ENCODE measurements at regions of chr10 and their contacts with region 1.

Region 1: DNA sequence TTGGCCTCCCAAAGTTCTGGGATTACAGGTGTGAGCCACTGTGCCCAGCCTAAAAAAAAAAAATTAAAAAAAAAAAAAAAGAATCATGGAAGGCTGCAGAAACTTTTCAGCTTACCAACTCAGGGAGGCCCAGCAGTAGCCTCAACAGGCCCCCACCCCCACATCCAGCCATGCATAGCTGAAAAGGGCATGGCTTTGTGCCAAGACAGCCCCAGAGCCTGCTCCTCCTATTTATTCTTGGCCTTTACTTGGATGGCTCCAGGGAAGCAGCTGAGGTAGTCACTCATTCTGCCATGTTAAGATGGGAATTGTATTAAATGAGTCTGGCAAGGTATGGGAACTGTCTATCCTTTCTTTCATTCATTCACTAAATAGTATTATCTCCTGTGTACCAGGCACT is 13.7 kb upstream of the CNNM2 start:
- DNase-seq: peak in 1 of 5 donors; percentile 41
- ATAC-seq: peak in 2 of 4 donors; percentile 11 to 50
- H3K4me3 ChIP-seq: no peak overlapping the region
- H3K27ac ChIP-seq: no peak overlapping the region
- H3K4me1 ChIP-seq: no peaks in the 10 kb centered on the region
- H3K27me3 ChIP-seq: no peaks in the 10 kb centered on the region
- CTCF ChIP-seq: no peak
- POLR2A ChIP-seq: no peak

Region 2: DNA sequence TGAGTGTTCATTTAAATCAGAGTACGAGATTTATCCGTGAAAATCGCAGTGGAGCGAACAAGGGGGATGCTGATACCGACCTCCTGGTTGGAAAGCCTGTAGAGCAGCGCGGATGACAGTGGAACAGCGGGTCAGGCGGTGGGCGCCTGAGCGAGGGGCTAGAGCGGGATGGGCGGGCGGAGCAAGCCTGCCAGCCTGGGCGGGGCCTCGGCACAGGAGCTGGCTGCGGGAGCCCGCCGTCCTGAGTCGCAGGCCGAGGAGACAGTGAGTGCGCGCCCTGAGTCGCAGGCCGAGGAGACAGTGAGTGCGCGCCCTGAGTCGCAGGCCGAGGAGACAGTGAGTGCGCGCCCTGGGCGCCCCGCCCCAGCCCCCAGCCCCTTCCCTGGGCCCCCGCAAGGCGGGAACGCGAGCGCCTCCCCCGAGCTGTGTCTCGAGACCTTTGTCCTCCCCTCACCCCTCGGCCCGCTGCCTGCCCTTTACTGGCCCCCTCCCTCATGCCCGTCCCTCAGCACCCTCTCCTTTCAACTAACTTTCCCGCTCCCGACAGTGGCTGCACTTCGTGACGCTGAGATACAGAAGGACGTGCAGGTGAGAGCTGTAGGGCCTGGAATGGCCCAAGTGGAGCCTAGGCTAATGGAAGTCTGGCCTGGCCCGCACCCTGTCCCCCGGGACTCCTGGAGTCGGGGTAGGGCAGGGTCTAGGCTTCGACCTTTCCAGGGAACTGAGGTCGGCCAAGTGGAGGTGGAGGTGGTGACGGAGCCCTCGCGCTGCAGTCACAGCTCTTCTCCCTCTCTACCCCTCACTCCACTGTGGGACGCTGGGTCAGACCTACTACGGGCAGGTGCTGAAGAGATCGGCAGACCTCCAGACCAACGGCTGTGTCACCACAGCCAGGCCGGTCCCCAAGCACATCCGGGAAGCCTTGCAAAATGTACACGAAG is 34.8 kb before region 1 on chr10 and contains the start of gene AS3MT:
- intact Hi-C with region 1: loop called in 1 of 10 experiments (anchors 5 kb)
- DNase-seq: peak; percentile 19 to 69 (median 48)
- ATAC-seq: peak; percentile 52 to 92 (median 82)
- H3K4me3 ChIP-seq: peak within 1 kb of the TSS; percentile 27 to 69 (median 60)
- H3K27ac ChIP-seq: peak within 1 kb of the TSS in 10 of 12 donors; percentile 20 to 75 (median 60)
- H3K4me1 ChIP-seq: peaks cover 0 to 20% (median 8%) of the 10 kb centered on the region in 12 donors
- H3K27me3 ChIP-seq: peaks cover 0 to 10% (median 0%) of the 10 kb centered on the region in 9 donors
- CTCF ChIP-seq: no peak
- POLR2A ChIP-seq: no peak
- total RNA-seq, gene AS3MT: 8.6 to 29.0 (median 15.8) TPM

Region 3: GRCh38 chr10:102917962-102918816 is 13.8 kb after region 1 on chr10 and contains the start of gene CNNM2:
- intact Hi-C with region 1: no loop called
- DNase-seq: peak; percentile 100
- ATAC-seq: peak; percentile 96 to 99 (median 98)
- H3K4me3 ChIP-seq: peak within 1 kb of the TSS; percentile 51 to 95 (median 86)
- H3K27ac ChIP-seq: peak within 1 kb of the TSS; percentile 26 to 91 (median 84)
- H3K4me1 ChIP-seq: peaks cover 0 to 45% (median 32%) of the 10 kb centered on the region in 12 donors
- H3K27me3 ChIP-seq: no peaks in the 10 kb centered on the region
- CTCF ChIP-seq: peak in 1 of 12 donors; percentile 11
- POLR2A ChIP-seq: peak in 1 of 2 donors; percentile 67
- total RNA-seq, gene CNNM2: 2.9 to 6.3 (median 4.1) TPM

Region 4: DNA sequence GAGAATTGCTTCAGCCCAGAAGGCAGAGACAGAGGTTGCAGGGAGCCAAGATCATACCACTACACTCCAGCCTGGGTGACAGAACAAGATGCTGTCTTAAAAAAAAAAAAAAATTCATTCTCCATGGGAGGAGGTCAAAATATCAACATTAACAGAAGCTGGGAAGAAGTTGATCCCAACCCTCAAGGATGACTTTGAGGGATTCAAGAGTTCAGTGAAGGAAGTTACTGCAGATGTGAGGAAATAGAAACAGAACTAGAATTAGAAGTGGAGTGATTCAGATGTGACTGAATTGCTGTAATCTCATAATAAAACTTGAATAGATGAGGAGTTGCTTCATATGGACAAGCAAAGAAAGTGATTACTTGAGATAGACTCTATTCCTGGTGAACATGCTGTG is 321.6 kb after region 1 on chr10:
- intact Hi-C with region 1: no loop called
- DNase-seq: no peak
- ATAC-seq: no peak
- H3K4me3 ChIP-seq: no peak overlapping the region
- H3K27ac ChIP-seq: peak overlapping the region in 1 of 12 donors; percentile 12
- H3K4me1 ChIP-seq: peaks cover 0 to 29% (median 11%) of the 10 kb centered on the region in 12 donors
- H3K27me3 ChIP-seq: no peaks in the 10 kb centered on the region
- CTCF ChIP-seq: no peak
- POLR2A ChIP-seq: no peak